HCT116 (cell line): ENCODE measurements at regions of chr1 and their contacts with region 1.

Region 1: DNA sequence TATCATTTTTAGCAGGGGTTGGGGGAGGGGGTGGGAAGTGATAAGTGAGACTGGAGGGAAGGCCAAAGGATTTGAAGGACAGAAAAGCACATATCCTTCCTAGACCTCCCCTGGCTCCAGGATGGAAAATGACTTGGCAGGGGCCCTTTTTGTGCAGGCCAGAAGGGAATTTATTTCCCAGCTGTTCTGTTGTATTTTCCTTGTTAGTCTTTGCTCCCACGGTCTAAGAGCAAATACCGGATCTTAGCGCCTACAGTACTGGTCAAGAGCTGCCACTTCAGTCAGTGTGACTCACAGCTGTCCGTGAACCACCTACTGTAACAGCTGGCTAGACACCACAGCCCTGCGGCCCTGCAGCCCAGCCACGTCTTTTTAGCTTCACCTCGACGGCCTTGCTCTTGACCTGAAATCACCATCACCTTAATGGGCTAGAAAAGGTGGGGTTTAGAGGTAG is 51.0 kb upstream of the ERRFI1 start:
- DNase-seq: peak; percentile 88
- ATAC-seq: peak; percentile 78
- H3K4me3 ChIP-seq: peak overlapping the region in 1 of 2 experiments; percentile 48; a peak in 2 of 4 replicates
- H3K27ac ChIP-seq: peak overlapping the region; percentile 92
- H3K4me1 ChIP-seq: peaks cover 92 to 99% of the 10 kb centered on the region in 2 experiments
- H3K27me3 ChIP-seq: no peaks in the 10 kb centered on the region
- CTCF ChIP-seq: no peak
- POLR2A ChIP-seq: peak; percentile 37
- RAD21 ChIP-seq: no peak

Region 2: GRCh38 chr1:7856345-7856744 is 220.8 kb before region 1 on chr1:
- CTCF ChIA-PET with region 1: no interaction called
- POLR2A ChIA-PET with region 1: no interaction called
- RAD21 ChIA-PET with region 1: no interaction called
- intact Hi-C with region 1: no loop called
- DNase-seq: no peak
- ATAC-seq: no peak
- H3K4me3 ChIP-seq: no peak overlapping the region
- H3K27ac ChIP-seq: no peak overlapping the region
- H3K4me1 ChIP-seq: no peaks in the 10 kb centered on the region
- H3K27me3 ChIP-seq: no peaks in the 10 kb centered on the region
- CTCF ChIP-seq: no peak
- POLR2A ChIP-seq: no peak
- RAD21 ChIP-seq: no peak

Region 3: GRCh38 chr1:8026153-8026975 is 50.8 kb before region 1 on chr1 and contains the start of gene ERRFI1:
- CTCF ChIA-PET with region 1: interaction called, 7 read pairs
- POLR2A ChIA-PET with region 1: interaction called, 80 read pairs
- RAD21 ChIA-PET with region 1: interaction called in 1 of 2 experiments, 3 read pairs
- intact Hi-C with region 1: loop called (anchors 5 kb)
- DNase-seq: peak; percentile 83
- ATAC-seq: peak; percentile 74
- H3K4me3 ChIP-seq: peak within 1 kb of the TSS; percentile 88 to 93
- H3K27ac ChIP-seq: peak within 1 kb of the TSS; percentile 99
- H3K4me1 ChIP-seq: peaks cover 64 to 87% of the 10 kb centered on the region in 2 experiments
- H3K27me3 ChIP-seq: no peaks in the 10 kb centered on the region
- CTCF ChIP-seq: no peak
- POLR2A ChIP-seq: peak; percentile 96
- RAD21 ChIP-seq: no peak
- total RNA-seq, gene ERRFI1: 777 TPM

Region 4: GRCh38 chr1:8047681-8048445 is 29.3 kb before region 1 on chr1:
- CTCF ChIA-PET with region 1: interaction called, 3 read pairs
- POLR2A ChIA-PET with region 1: interaction called, 17 read pairs
- RAD21 ChIA-PET with region 1: no interaction called
- intact Hi-C with region 1: loop called (anchors 1 kb)
- DNase-seq: peak; percentile 81
- ATAC-seq: peak; percentile 56
- H3K4me3 ChIP-seq: peak overlapping the region in 1 of 2 experiments; percentile 5; a peak in 1 of 4 replicates
- H3K27ac ChIP-seq: peak overlapping the region; percentile 92
- H3K4me1 ChIP-seq: peaks cover 70 to 85% of the 10 kb centered on the region in 2 experiments
- H3K27me3 ChIP-seq: no peaks in the 10 kb centered on the region
- CTCF ChIP-seq: no peak
- POLR2A ChIP-seq: no peak
- RAD21 ChIP-seq: no peak; the same call in 1 of the 2 replicates

Region 5: DNA sequence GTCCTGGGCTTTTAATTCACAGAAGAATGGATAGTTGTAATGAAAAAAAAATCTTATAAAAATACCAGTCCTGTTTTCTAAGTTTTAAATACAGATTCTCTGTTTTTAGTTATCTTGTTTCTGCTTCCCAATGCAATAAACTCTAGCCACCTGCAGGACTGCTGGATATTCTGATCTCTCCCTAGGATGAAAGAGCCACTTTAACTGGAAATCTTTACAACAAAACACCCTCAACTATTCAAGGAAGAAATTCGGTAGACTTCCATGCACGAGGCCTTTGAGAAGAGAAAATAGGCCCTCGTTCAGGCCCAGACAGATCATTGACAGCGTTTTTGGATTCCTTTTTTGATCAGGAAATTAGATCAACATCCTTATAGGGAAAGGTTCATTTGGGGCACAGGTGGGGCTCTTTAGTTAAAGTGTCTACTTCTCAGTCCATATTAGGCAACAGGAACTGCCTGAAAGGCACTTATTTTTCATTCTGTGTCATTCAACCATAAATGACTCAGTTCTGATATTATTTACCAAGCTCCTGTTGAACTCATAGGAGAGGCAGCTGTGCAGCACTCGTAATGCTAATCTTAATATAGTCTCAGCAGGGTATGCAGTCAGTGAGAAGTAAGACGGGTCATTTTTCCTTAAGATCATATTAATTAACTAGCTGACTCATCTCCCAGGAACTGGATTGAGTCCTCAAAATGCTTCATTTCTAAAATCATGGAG is 20.1 kb after region 1 on chr1:
- CTCF ChIA-PET with region 1: interaction called, 3 read pairs
- POLR2A ChIA-PET with region 1: interaction called, 40 read pairs
- RAD21 ChIA-PET with region 1: no interaction called
- intact Hi-C with region 1: no loop called
- DNase-seq: peak; percentile 98
- ATAC-seq: peak; percentile 85
- H3K4me3 ChIP-seq: peak overlapping the region in 1 of 2 experiments; percentile 17; a peak in 1 of 4 replicates
- H3K27ac ChIP-seq: peak overlapping the region; percentile 97
- H3K4me1 ChIP-seq: peaks cover 75 to 83% of the 10 kb centered on the region in 2 experiments
- H3K27me3 ChIP-seq: no peaks in the 10 kb centered on the region
- CTCF ChIP-seq: no peak
- POLR2A ChIP-seq: no peak
- RAD21 ChIP-seq: no peak

Region 6: GRCh38 chr1:8154621-8155052 is 77.5 kb after region 1 on chr1:
- CTCF ChIA-PET with region 1: no interaction called
- POLR2A ChIA-PET with region 1: interaction called, 15 read pairs
- RAD21 ChIA-PET with region 1: interaction called in 1 of 2 experiments, 3 read pairs
- intact Hi-C with region 1: no loop called
- DNase-seq: peak; percentile 85
- ATAC-seq: peak; percentile 84
- H3K4me3 ChIP-seq: peak overlapping the region in 1 of 2 experiments; percentile 33; a peak in 2 of 4 replicates
- H3K27ac ChIP-seq: peak overlapping the region; percentile 85
- H3K4me1 ChIP-seq: peaks cover 37 to 38% of the 10 kb centered on the region in 2 experiments
- H3K27me3 ChIP-seq: no peaks in the 10 kb centered on the region
- CTCF ChIP-seq: no peak
- POLR2A ChIP-seq: no peak
- RAD21 ChIP-seq: peak; percentile 16; the same call in 1 of the 2 replicates

Region 7: DNA sequence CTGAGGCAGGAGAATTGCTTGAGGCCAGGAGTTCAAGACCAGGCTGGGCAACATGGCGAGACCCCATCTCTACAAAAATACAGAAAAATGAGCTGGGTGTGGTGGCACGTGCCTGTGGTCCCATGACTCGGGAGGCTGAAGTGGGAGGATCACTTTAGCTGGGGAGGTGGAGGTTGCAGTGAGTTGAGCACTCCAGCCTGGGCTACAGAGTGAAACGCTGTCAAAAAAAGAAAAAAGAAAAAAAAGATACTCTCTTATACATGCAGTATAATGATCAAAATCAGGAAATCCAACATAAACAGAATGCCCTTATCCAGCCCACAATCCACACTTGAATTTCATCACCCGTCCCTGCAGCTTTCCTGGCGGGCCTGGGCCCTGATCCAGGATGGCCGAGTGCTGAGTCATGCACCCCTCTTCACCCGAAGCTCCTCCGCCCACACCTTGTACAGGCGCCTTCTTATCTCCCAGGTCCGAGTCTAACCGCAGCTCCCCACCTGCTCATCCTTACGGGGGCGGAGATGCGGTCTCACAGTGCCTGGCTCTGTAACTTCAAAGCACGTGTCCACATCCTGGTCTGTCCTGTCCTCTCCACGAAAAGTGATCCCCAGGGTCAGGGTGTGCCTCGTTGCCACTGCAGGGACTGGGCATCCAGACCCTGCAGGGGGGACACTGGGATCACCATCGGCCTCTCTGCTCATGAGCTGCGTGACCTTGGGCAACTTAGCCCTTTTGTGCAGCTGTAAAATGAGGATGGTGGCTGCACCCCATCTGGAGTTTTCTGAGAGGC is 120.5 kb after region 1 on chr1:
- CTCF ChIA-PET with region 1: no interaction called
- POLR2A ChIA-PET with region 1: interaction called, 39 read pairs
- RAD21 ChIA-PET with region 1: interaction called in 1 of 2 experiments, 5 read pairs
- intact Hi-C with region 1: no loop called
- DNase-seq: peak; percentile 97
- ATAC-seq: peak; percentile 74
- H3K4me3 ChIP-seq: no peak overlapping the region
- H3K27ac ChIP-seq: peak overlapping the region; percentile 91
- H3K4me1 ChIP-seq: peaks cover 87 to 99% of the 10 kb centered on the region in 2 experiments
- H3K27me3 ChIP-seq: no peaks in the 10 kb centered on the region
- CTCF ChIP-seq: no peak
- POLR2A ChIP-seq: peak; percentile 26
- RAD21 ChIP-seq: no peak